ENCODE measurements at regions of chr20 and their contacts with region 1.

Region 1: GRCh38 chr20:30892541-30893345 is 364.7 kb upstream of the DEFB115 start:
- DNase-seq: no peak
- ATAC-seq: no peak
- H3K4me3 ChIP-seq: no peak overlapping the region
- H3K27ac ChIP-seq: no peak overlapping the region
- H3K4me1 ChIP-seq: peaks cover 0 to 8% of the 10 kb centered on the region in 2 experiments; a peak in 2 of 5 replicates
- H3K27me3 ChIP-seq: peaks cover 0 to 21% of the 10 kb centered on the region in 2 experiments; a peak in 1 of 5 replicates
- CTCF ChIP-seq: no peak
- EP300 ChIP-seq: no peak
- POLR2A ChIP-seq: no peak
- RAD21 ChIP-seq: no peak

Region 2: GRCh38 chr20:30485331-30486102 is 407.2 kb before region 1 on chr20:
- CTCF ChIA-PET with region 1: no interaction called
- POLR2A ChIA-PET with region 1: no interaction called
- in situ Hi-C with region 1: loop called (anchors 25 kb)
- intact Hi-C with region 1: no loop called
- DNase-seq: no peak
- ATAC-seq: no peak
- H3K4me3 ChIP-seq: no peak overlapping the region
- H3K27ac ChIP-seq: no peak overlapping the region
- H3K4me1 ChIP-seq: peaks cover 0 to 6% of the 10 kb centered on the region in 2 experiments; a peak in 1 of 5 replicates
- H3K27me3 ChIP-seq: peaks cover 0 to 11% of the 10 kb centered on the region in 2 experiments; a peak in 1 of 5 replicates
- CTCF ChIP-seq: no peak
- EP300 ChIP-seq: no peak
- POLR2A ChIP-seq: no peak
- RAD21 ChIP-seq: no peak